ENCODE measurements at regions of chr17 and their contacts with region 1.

Region 1: GRCh38 chr17:47808036-47808829 is 13.4 kb downstream of the OSBPL7 start:
- DNase-seq: no peak
- ATAC-seq: no peak
- H3K4me3 ChIP-seq: no peak overlapping the region
- H3K27ac ChIP-seq: peak overlapping the region; percentile 92
- H3K4me1 ChIP-seq: peaks cover 48% of the 10 kb centered on the region
- H3K27me3 ChIP-seq: no peaks in the 10 kb centered on the region
- CTCF ChIP-seq: no peak

Region 2: DNA sequence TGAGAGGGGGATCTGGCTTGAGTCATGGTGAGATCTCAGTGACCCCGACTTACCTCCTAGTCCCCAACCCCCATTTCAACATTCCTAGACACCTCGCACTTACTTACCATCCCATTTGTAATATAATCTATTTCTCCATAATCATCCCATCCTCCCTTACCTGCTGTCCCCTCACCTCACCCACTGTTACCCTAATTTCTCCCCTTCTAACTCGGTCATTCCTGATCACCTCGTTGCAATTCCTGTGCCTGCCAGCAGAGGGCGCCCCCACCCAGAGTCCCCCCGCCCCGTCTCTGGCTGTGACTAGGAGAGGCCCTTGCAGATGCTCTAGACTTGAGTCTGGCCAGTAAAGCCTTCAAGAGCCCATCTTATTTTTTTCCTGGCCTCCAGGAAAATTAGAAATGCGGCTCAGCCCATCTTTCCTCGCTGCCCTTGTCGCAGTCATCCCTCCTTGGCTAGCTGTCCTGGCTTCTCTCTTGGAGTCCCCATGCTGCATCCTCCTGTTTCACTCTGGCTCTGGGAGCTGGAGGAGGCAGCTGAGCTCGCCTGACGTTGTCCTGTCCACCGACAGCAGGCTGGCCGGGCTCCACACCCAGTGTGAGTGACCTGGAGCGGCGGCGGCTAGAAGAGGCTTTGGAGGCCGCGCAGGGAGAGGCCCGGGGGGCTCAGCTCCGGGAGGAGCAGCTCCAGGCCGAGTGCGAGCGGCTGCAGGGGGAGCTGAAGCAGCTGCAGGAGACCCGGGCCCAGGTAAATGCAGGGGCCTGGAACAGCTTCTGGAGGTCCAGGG is 109.3 kb before region 1 on chr17:
- intact Hi-C with region 1: loop called (anchors 5 kb)
- DNase-seq: peak; percentile 51 to 78
- ATAC-seq: peak in 3 of 4 donors; percentile 26 to 35 (median 29)
- H3K4me3 ChIP-seq: no peak overlapping the region
- H3K27ac ChIP-seq: no peak overlapping the region
- H3K4me1 ChIP-seq: peaks cover 4% of the 10 kb centered on the region
- H3K27me3 ChIP-seq: no peaks in the 10 kb centered on the region
- CTCF ChIP-seq: peak; percentile 93

Region 3: GRCh38 chr17:47776330-47777197 is 31.7 kb before region 1 on chr17:
- intact Hi-C with region 1: no loop called
- DNase-seq: no peak
- ATAC-seq: peak in 3 of 4 donors; percentile 39 to 67 (median 65)
- H3K4me3 ChIP-seq: no peak overlapping the region
- H3K27ac ChIP-seq: no peak overlapping the region
- H3K4me1 ChIP-seq: no peaks in the 10 kb centered on the region
- H3K27me3 ChIP-seq: peaks cover 0 to 47% (median 19%) of the 10 kb centered on the region in 3 donors
- CTCF ChIP-seq: peak; percentile 62